Caco-2 (cell line): ENCODE measurements at regions of chr5 and their contacts with region 1.

Region 1: GRCh38 chr5:136132557-136133221 is at the start of gene SMAD5:
- DNase-seq: peak; percentile 97 to 98
- H3K4me3 ChIP-seq: peak within 1 kb of the TSS; percentile 80
- H3K4me3 Mint-ChIP-seq: peak within 1 kb of the TSS; percentile 78
- H3K27ac Mint-ChIP-seq: peak within 1 kb of the TSS; percentile 94
- H3K4me1 ChIP-seq: peaks cover 44% of the 10 kb centered on the region
- H3K4me1 Mint-ChIP-seq: peaks cover 35% of the 10 kb centered on the region
- H3K27me3 ChIP-seq: no peaks in the 10 kb centered on the region
- H3K27me3 Mint-ChIP-seq: no peaks in the 10 kb centered on the region
- CTCF ChIP-seq: no peak
- total RNA-seq, gene SMAD5: 141 and 142 TPM in 2 replicates

Region 2: DNA sequence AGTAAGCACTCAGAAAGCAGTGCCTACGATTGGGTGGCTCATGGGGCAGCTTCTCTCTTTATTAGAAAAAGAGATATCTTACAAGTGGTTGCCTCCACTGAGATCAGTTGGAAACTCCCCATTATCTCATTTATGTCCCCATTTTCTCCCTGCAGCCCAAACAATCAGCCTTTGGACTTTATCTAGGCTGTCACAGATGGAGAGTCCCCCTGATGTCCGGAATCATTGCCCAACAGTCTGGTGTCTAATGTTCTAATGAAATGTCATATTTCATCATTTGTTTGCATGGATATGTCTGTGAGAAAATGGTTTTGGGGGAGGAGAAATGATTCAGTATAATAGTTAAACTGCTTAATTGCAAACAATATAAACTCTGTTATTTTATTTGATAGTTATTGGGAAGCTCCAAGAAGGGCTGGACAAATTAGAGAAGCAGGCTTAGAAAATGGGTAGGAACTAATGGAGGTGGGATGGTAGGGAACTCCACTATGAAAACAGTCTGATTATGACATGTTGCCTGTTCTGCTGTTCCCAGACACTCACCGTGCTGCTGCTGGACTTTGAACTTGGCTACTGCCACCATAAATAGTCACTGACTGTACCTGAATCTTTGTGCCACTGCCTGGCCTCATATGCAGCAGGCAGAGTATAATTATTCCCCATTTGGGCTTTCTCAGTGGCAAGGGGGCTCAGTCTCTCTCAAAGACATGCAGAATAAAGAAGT is 38.3 kb before region 1 on chr5:
- CTCF ChIA-PET with region 1: no interaction called
- POLR2A ChIA-PET with region 1: interaction called, 10 read pairs
- intact Hi-C with region 1: loop called (anchors 1 kb)
- DNase-seq: peak; percentile 51 to 75
- H3K4me3 ChIP-seq: no peak overlapping the region
- H3K4me3 Mint-ChIP-seq: peak overlapping the region; percentile 9
- H3K27ac Mint-ChIP-seq: peak overlapping the region; percentile 69
- H3K4me1 ChIP-seq: peaks cover 65% of the 10 kb centered on the region
- H3K4me1 Mint-ChIP-seq: peaks cover 67% of the 10 kb centered on the region
- H3K27me3 ChIP-seq: no peaks in the 10 kb centered on the region
- H3K27me3 Mint-ChIP-seq: no peaks in the 10 kb centered on the region
- CTCF ChIP-seq: no peak

Region 3: GRCh38 chr5:136103118-136103517 is 29.6 kb before region 1 on chr5:
- CTCF ChIA-PET with region 1: no interaction called
- POLR2A ChIA-PET with region 1: interaction called, 12 read pairs
- intact Hi-C with region 1: loop called (anchors 1 kb)
- DNase-seq: no peak
- H3K4me3 ChIP-seq: no peak overlapping the region
- H3K4me3 Mint-ChIP-seq: no peak overlapping the region
- H3K27ac Mint-ChIP-seq: peak overlapping the region; percentile 87
- H3K4me1 ChIP-seq: peaks cover 96% of the 10 kb centered on the region
- H3K4me1 Mint-ChIP-seq: peaks cover 54% of the 10 kb centered on the region
- H3K27me3 ChIP-seq: no peaks in the 10 kb centered on the region
- H3K27me3 Mint-ChIP-seq: no peaks in the 10 kb centered on the region
- CTCF ChIP-seq: no peak

Region 4: DNA sequence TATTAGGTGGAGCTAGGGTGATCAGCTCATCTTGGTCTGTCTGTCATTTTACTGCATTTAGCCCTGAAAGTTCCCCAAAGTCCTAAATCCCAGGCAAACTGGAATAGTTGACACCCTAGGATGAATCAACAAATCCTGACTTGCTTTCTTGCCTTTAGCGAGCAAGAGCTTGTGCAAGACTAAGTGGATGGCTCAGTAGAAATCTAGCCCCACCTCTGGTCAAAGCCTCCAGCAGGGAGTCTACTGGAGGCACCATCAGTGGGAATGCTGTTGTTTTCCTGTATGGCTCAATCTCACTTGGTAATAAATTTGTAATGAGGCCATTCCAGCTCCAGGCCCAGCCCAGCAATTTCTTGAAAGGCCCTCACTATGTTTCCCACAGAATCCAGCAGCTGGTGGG is 276.3 kb after region 1 on chr5:
- CTCF ChIA-PET with region 1: no interaction called
- POLR2A ChIA-PET with region 1: no interaction called
- intact Hi-C with region 1: no loop called
- DNase-seq: no peak
- H3K4me3 ChIP-seq: no peak overlapping the region
- H3K4me3 Mint-ChIP-seq: no peak overlapping the region
- H3K27ac Mint-ChIP-seq: no peak overlapping the region
- H3K4me1 ChIP-seq: no peaks in the 10 kb centered on the region
- H3K4me1 Mint-ChIP-seq: no peaks in the 10 kb centered on the region
- H3K27me3 ChIP-seq: no peaks in the 10 kb centered on the region
- H3K27me3 Mint-ChIP-seq: peaks cover 14% of the 10 kb centered on the region
- CTCF ChIP-seq: no peak